ENCODE measurements at regions of chr4 and their contacts with region 1.

Region 1: GRCh38 chr4:103498161-103499070 is 221.4 kb downstream of the TACR3 start:
- DNase-seq: peak; percentile 48
- ATAC-seq: peak; percentile 86
- H3K4me3 Mint-ChIP-seq: no peak overlapping the region
- H3K27ac Mint-ChIP-seq: no peak overlapping the region
- H3K4me1 Mint-ChIP-seq: peaks cover 7% of the 10 kb centered on the region
- H3K27me3 Mint-ChIP-seq: peaks cover 2% of the 10 kb centered on the region

Region 2: GRCh38 chr4:103198111-103198765 is 300.2 kb before region 1 on chr4 and contains the start of gene CENPE:
- CTCF ChIA-PET with region 1: no interaction called
- POLR2A ChIA-PET with region 1: no interaction called
- intact Hi-C with region 1: loop called in 1 of 2 experiments (anchors 5 kb)
- DNase-seq: peak; percentile 91
- ATAC-seq: peak; percentile 88
- H3K4me3 Mint-ChIP-seq: peak within 1 kb of the TSS; percentile 92
- H3K27ac Mint-ChIP-seq: peak within 1 kb of the TSS; percentile 92
- H3K4me1 Mint-ChIP-seq: peaks cover 8% of the 10 kb centered on the region
- H3K27me3 Mint-ChIP-seq: peaks cover 7% of the 10 kb centered on the region
- total RNA-seq, gene CENPE: 42.4 to 54.0 TPM

Region 3: GRCh38 chr4:104093247-104093646 is 594.8 kb after region 1 on chr4:
- CTCF ChIA-PET with region 1: no interaction called
- POLR2A ChIA-PET with region 1: no interaction called
- intact Hi-C with region 1: no loop called
- DNase-seq: no peak
- ATAC-seq: no peak
- H3K4me3 Mint-ChIP-seq: no peak overlapping the region
- H3K27ac Mint-ChIP-seq: no peak overlapping the region
- H3K4me1 Mint-ChIP-seq: no peaks in the 10 kb centered on the region
- H3K27me3 Mint-ChIP-seq: no peaks in the 10 kb centered on the region